H1 (cell line): ENCODE measurements at regions of chr6 and their contacts with region 1.

Region 1: GRCh38 chr6:149961728-149962425 is 1.9 kb upstream of the ULBP1 start:
- DNase-seq: peak in 1 of 2 experiments; percentile 66
- H3K4me3 ChIP-seq: no peak overlapping the region
- H3K27ac ChIP-seq: no peak overlapping the region
- H3K4me1 ChIP-seq: peaks cover 0 to 20% (median 17%) of the 10 kb centered on the region in 4 experiments; a peak in 5 of 7 replicates
- H3K27me3 ChIP-seq: peaks cover 38 to 80% (median 64%) of the 10 kb centered on the region in 4 experiments
- CTCF ChIP-seq: peak in 2 of 3 experiments; percentile 59 to 65; a peak in 3 of 4 replicates
- EP300 ChIP-seq: no peak
- POLR2A ChIP-seq: no peak
- RAD21 ChIP-seq: peak; percentile 39 to 49; a peak in 3 of 4 replicates

Region 2: DNA sequence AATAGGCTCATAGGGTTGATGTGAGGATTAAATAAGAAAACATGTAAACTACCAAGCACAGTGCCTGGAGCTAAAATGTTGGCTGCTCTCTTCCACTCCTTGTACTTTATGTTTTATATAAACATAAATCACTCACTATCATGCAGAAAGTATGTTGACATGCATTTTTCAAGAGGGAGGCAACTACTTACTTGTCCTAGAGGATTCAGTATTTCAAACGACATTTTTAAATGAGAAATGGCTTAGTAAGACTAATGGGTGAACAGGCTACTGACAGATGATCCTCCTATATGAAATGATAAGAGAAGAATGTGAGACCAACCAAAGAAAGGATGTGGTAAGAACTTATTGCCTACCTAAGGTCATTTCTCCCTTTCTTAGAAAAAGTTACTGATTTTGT is 265.0 kb before region 1 on chr6:
- CTCF ChIA-PET with region 1: no interaction called
- POLR2A ChIA-PET with region 1: no interaction called
- DNase-seq: no peak
- H3K4me3 ChIP-seq: no peak overlapping the region
- H3K27ac ChIP-seq: no peak overlapping the region
- H3K4me1 ChIP-seq: peaks cover 2 to 3% (median 2%) of the 10 kb centered on the region in 4 experiments; a peak in 4 of 7 replicates
- H3K27me3 ChIP-seq: no peaks in the 10 kb centered on the region
- CTCF ChIP-seq: no peak
- EP300 ChIP-seq: no peak
- POLR2A ChIP-seq: no peak
- RAD21 ChIP-seq: no peak

Region 3: DNA sequence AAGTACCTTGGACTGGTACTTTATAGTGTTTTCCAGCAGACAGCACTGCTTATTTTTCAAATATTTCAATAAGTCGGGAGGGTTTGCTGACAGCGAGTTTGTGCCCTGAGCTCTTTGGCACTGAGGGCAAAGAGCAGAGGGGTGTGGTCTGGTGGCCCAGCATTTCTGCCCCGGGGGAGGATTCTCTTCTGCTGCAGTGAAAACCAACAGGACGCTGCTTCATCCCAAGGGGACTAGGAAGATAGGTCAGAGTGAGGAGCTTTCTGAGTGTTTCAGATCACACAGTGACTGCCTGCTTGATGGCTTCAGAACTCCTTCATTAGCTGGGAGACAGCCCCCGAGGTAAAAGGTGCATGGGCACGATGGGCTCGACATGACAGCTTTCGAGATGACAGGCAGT is 11.5 kb before region 1 on chr6:
- CTCF ChIA-PET with region 1: interaction called, 11 read pairs
- POLR2A ChIA-PET with region 1: no interaction called
- DNase-seq: peak in 1 of 2 experiments; percentile 31
- H3K4me3 ChIP-seq: no peak overlapping the region
- H3K27ac ChIP-seq: no peak overlapping the region
- H3K4me1 ChIP-seq: peaks cover 0 to 2% (median 0%) of the 10 kb centered on the region in 4 experiments; a peak in 1 of 7 replicates
- H3K27me3 ChIP-seq: peaks cover 13 to 62% (median 38%) of the 10 kb centered on the region in 4 experiments
- CTCF ChIP-seq: no peak
- EP300 ChIP-seq: no peak
- POLR2A ChIP-seq: no peak
- RAD21 ChIP-seq: no peak

Region 4: DNA sequence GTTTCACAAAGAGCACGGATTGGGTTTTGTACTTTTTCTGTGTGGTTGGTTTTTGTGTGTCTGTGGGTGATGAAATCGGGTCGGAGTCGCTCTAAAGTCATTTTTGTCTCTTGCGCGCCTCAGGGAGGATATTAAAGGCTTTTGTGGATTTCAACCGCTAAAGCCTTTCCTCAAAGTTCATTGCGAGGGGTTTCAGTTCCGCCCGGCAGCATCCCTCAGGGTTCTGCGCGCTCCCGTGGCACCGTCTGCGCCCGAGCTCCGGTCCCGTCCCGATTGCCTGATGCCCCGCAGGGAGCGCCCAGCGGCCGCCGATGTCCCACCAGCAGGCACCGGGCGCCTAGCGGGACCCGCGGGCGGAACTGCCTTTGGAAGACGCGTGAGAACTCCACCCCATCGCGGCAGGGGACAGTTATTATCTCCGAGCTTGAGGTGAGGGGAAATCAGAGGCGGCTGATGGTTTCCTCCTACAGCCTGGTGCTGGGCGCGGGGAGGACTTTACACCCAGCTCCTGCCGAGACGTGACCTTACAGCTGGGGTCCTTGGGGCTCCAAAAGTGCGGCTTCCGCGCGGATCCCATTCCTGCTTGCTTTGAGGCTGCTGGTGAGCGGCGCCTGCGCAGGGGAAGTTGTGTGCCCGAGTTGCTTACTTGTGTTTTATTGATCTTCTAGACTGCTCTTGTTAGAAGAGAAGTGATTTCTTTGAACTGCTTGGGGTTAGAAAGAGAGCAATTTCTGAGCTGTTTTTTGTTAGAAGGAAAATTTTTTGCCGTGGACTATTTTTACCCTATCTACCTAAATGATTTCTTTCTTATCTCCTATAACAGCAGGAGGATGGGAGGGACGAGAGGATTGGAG is 29.0 kb after region 1 on chr6:
- CTCF ChIA-PET with region 1: interaction called, 11 read pairs
- POLR2A ChIA-PET with region 1: interaction called, 5 read pairs
- DNase-seq: peak in 1 of 2 experiments; percentile 70
- H3K4me3 ChIP-seq: peak overlapping the region; percentile 0 to 53 (median 29); a peak in 7 of 8 replicates
- H3K27ac ChIP-seq: no peak overlapping the region
- H3K4me1 ChIP-seq: peaks cover 2 to 21% (median 15%) of the 10 kb centered on the region in 4 experiments
- H3K27me3 ChIP-seq: peaks cover 67 to 93% (median 85%) of the 10 kb centered on the region in 4 experiments
- CTCF ChIP-seq: no peak
- EP300 ChIP-seq: no peak
- POLR2A ChIP-seq: no peak
- RAD21 ChIP-seq: no peak

Region 5: GRCh38 chr6:150004783-150005717 is 43.2 kb after region 1 on chr6:
- CTCF ChIA-PET with region 1: interaction called, 11 read pairs
- POLR2A ChIA-PET with region 1: interaction called, 4 read pairs
- DNase-seq: peak; percentile 83 to 95
- H3K4me3 ChIP-seq: peak overlapping the region; percentile 69 to 76 (median 72)
- H3K27ac ChIP-seq: no peak overlapping the region; the same call in 1 of the 2 replicates
- H3K4me1 ChIP-seq: peaks cover 0 to 9% (median 4%) of the 10 kb centered on the region in 4 experiments; a peak in 4 of 7 replicates
- H3K27me3 ChIP-seq: peaks cover 16 to 42% (median 34%) of the 10 kb centered on the region in 4 experiments
- CTCF ChIP-seq: 0 out of 4 replicates have a peak, but pooled peaks of 1 of the 3 experiments have one; percentile 4
- EP300 ChIP-seq: no peak
- POLR2A ChIP-seq: peak in 1 of 2 experiments; percentile 82; a peak in 2 of 3 replicates
- RAD21 ChIP-seq: no peak